Lower leg skin (tissue), 4 donors: ENCODE measurements at regions of chr5 and their contacts with region 1.

Region 1: GRCh38 chr5:136202469-136203205 is 9.7 kb upstream of the SMIM32 start:
- DNase-seq: peak in 1 of 2 donors; percentile 58
- H3K4me3 ChIP-seq: no peak overlapping the region
- CTCF ChIP-seq: no peak
- POLR2A ChIP-seq: no peak

Region 2: GRCh38 chr5:135880278-135880677 is 322.4 kb before region 1 on chr5:
- intact Hi-C with region 1: loop called (anchors 5 kb)
- DNase-seq: peak in 1 of 2 donors; percentile 29
- H3K4me3 ChIP-seq: no peak overlapping the region
- CTCF ChIP-seq: no peak
- POLR2A ChIP-seq: no peak

Region 3: DNA sequence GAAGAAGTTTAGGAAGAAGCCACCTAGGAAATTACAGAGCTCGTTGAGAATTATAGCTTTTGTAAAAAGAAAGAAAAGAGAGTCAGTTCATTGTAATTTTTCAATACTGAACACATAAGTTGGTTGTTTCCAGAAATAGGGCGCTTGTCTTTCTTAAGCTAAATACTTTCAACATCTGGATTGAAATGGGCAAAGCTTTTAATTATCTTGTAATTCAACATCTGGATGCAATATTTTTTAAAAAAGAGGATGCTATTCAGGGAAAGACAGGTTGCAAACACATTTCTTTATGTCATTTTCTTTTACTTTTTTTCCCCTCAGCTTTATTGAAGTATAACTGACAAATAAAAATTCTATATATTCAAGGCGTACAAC is 263.4 kb after region 1 on chr5:
- intact Hi-C with region 1: no loop called
- DNase-seq: no peak
- H3K4me3 ChIP-seq: no peak overlapping the region
- CTCF ChIP-seq: no peak
- POLR2A ChIP-seq: no peak